ENCODE measurements at regions of chr9 and their contacts with region 1.

Region 1: DNA sequence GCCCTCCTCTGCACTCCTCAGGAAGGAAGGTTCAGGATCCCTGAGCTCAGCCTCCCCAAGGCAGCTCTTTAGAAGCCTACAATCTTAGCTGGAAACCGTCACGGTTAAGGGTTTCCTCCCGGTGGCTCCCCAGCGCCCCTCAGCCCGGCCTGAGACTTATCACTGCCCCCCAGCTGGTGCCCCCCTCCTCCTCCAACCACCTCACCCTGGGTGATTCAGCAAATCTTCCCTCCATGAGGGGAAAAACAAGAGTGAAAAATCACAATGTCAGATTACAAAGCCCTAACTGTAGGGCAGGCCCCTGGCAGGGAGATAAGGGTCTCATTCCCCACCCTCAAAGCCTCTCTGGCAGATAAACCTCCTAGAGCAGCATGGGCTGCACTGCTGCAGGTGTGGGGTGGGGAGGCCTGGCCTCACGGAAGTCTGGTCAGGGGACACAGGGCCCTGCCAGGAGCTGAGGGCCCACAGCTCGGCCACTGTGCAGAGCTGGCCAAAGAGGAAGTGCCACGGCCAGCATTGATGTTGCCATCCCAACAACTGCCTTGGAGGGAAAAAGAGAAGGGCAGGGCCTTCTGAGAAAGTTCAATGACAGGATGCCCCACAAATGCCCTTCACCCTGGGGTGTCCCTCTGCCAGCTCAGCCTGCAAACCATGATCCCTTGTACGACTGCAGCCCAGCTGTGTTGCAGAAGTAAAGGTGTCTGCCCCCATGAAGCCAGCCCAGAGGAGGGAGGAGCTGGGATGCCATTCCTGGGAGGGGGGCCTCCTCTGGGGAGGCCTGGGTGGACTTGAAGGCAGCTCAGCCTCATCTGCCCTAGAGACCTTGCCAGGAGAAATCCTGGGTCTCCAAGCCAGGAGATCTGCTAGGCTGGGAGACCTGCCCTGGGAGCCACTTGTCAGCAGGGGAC is 25.9 kb downstream of the GFI1B start:
- DNase-seq: no peak
- H3K4me3 ChIP-seq: peak overlapping the region in 1 of 4 experiments; percentile 28; a peak in 4 of 8 replicates
- H3K27ac ChIP-seq: no peak overlapping the region
- H3K4me1 ChIP-seq: peaks cover 3 to 25% (median 18%) of the 10 kb centered on the region in 4 experiments
- H3K27me3 ChIP-seq: peaks cover 0 to 40% (median 23%) of the 10 kb centered on the region in 4 experiments; a peak in 6 of 7 replicates
- CTCF ChIP-seq: no peak
- EP300 ChIP-seq: no peak
- POLR2A ChIP-seq: no peak
- RAD21 ChIP-seq: no peak

Region 2: GRCh38 chr9:132923346-132923902 is 80.9 kb before region 1 on chr9:
- CTCF ChIA-PET with region 1: no interaction called
- POLR2A ChIA-PET with region 1: no interaction called
- DNase-seq: no peak
- H3K4me3 ChIP-seq: no peak overlapping the region
- H3K27ac ChIP-seq: no peak overlapping the region
- H3K4me1 ChIP-seq: no peaks in the 10 kb centered on the region
- H3K27me3 ChIP-seq: no peaks in the 10 kb centered on the region
- CTCF ChIP-seq: no peak
- EP300 ChIP-seq: no peak
- POLR2A ChIP-seq: no peak
- RAD21 ChIP-seq: no peak

Region 3: DNA sequence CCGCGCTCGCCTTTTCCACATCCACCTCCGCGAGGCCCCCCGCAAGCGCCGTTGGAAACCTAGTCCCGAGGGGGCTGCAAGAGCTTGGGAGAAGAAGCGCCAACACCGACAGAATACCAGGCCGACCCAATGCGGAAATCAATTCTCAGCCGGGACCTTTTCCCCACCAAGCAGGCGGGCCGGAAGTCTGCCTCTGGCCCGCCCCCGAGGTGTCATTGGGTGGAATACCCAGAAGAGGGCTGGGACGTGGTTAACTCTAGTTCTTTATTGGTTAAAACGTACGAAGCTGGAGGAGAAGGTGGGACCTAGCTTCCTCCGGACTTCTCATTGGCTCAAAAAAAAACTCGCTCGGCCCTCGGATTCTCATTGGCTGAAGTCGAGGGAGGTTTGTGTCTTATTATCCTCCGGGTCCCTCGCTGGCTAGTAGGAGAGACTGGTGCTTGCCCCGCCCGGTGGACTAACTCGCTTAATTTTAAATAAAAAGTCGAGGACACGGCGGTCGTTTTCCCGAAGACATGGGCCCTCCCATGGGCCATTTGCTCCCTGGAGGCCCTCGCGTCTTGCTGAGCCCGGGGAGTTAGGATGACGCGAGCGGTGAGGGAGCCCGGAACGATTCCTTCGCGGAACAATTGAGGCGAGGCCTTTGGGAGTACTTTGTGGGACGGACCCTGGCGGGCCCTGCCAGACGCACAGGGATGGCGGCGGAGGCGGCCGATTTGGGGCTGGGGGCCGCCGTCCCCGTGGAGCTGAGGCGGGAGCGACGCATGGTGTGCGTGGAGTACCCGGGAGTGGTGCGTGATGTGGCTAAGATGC is 26.2 kb after region 1 on chr9 and contains the start of gene GTF3C5:
- CTCF ChIA-PET with region 1: interaction called, 57 read pairs
- POLR2A ChIA-PET with region 1: interaction called, 17 read pairs
- DNase-seq: peak; percentile 89 to 91
- H3K4me3 ChIP-seq: peak within 1 kb of the TSS; percentile 95 to 99 (median 98)
- H3K27ac ChIP-seq: peak within 1 kb of the TSS; percentile 87
- H3K4me1 ChIP-seq: peaks cover 2 to 10% (median 5%) of the 10 kb centered on the region in 4 experiments; a peak in 6 of 7 replicates
- H3K27me3 ChIP-seq: no peaks in the 10 kb centered on the region; a peak in 1 of 7 replicates
- CTCF ChIP-seq: no peak
- EP300 ChIP-seq: peak in 1 of 2 experiments; percentile 42; a peak in 1 of 3 replicates
- POLR2A ChIP-seq: peak; percentile 61 to 72; a peak in 2 of 3 replicates
- RAD21 ChIP-seq: no peak; a peak in 1 of 4 replicates
- total RNA-seq, gene GTF3C5: 87.1 and 89.4 TPM in 2 replicates

Region 4: DNA sequence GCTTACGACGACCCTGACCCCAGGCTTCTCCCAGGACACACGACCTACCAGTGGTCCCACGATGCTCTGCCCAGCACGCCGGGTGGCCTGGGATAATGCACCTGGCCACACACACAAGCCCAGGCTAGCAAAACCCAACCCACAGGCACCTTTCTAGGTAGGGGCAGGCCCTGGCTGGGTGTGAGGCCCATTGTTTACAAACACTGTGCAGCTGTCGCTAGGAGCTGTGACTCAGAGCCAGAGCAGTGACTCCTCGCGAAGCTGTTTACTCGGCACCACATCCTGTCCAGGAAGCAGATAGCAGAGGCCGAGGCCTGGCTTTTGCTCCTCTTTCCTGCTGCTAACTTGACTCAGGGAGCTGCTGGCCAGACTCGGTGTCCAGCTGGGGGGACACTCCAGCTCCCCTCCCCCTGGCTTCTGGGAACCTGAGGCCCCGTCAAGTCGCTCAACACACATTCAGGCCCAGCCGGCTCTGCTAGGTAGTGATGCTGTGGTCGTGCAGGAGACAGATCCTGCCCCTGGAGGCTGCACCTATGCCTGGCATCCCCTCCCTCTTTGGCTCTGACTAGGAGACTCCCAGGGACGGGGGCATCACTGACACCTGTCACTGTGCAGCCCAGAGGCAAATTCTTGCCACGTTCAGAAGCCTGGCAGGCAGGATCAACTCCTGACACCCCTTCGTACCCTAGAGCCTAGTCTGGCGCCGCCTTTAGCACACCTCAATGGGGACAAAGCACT is 129.5 kb after region 1 on chr9:
- CTCF ChIA-PET with region 1: no interaction called
- POLR2A ChIA-PET with region 1: no interaction called
- DNase-seq: no peak
- H3K4me3 ChIP-seq: no peak overlapping the region
- H3K27ac ChIP-seq: peak overlapping the region; percentile 80
- H3K4me1 ChIP-seq: peaks cover 0 to 13% (median 10%) of the 10 kb centered on the region in 4 experiments; a peak in 5 of 7 replicates
- H3K27me3 ChIP-seq: no peaks in the 10 kb centered on the region; a peak in 1 of 7 replicates
- CTCF ChIP-seq: no peak
- EP300 ChIP-seq: 0 out of 3 replicates have a peak, but pooled peaks of 1 of the 2 experiments have one; percentile 10
- POLR2A ChIP-seq: no peak
- RAD21 ChIP-seq: no peak

Measured in H1 (cell line).